B cell (primary cell): ENCODE measurements at regions of chr7 and their contacts with region 1.

Region 1: GRCh38 chr7:5177060-5177459 is 13.0 kb upstream of the WIPI2 start:
- DNase-seq: no peak
- ATAC-seq: no peak
- H3K4me3 ChIP-seq: no peak overlapping the region
- H3K4me3 Mint-ChIP-seq: no peak overlapping the region
- H3K27ac ChIP-seq: no peak overlapping the region
- H3K27ac Mint-ChIP-seq: no peak overlapping the region
- H3K4me1 ChIP-seq: no peaks in the 10 kb centered on the region
- H3K4me1 Mint-ChIP-seq: no peaks in the 10 kb centered on the region
- H3K27me3 ChIP-seq: peaks cover 0 to 2% (median 0%) of the 10 kb centered on the region in 4 experiments
- H3K27me3 Mint-ChIP-seq: no peaks in the 10 kb centered on the region
- CTCF ChIP-seq: no peak

Region 2: GRCh38 chr7:4931943-4932342 is 245.1 kb before region 1 on chr7:
- CTCF ChIA-PET with region 1: no interaction called
- POLR2A ChIA-PET with region 1: no interaction called
- intact Hi-C with region 1: no loop called
- DNase-seq: no peak
- ATAC-seq: no peak
- H3K4me3 ChIP-seq: no peak overlapping the region
- H3K4me3 Mint-ChIP-seq: no peak overlapping the region
- H3K27ac ChIP-seq: no peak overlapping the region
- H3K27ac Mint-ChIP-seq: no peak overlapping the region
- H3K4me1 ChIP-seq: no peaks in the 10 kb centered on the region
- H3K4me1 Mint-ChIP-seq: no peaks in the 10 kb centered on the region
- H3K27me3 ChIP-seq: no peaks in the 10 kb centered on the region
- H3K27me3 Mint-ChIP-seq: peaks cover 5% of the 10 kb centered on the region
- CTCF ChIP-seq: no peak

Region 3: GRCh38 chr7:5139998-5140397 is 37.1 kb before region 1 on chr7:
- CTCF ChIA-PET with region 1: interaction called, 5 read pairs
- POLR2A ChIA-PET with region 1: no interaction called
- intact Hi-C with region 1: loop called (anchors 1 kb)
- DNase-seq: peak; percentile 45
- ATAC-seq: no peak
- H3K4me3 ChIP-seq: no peak overlapping the region
- H3K4me3 Mint-ChIP-seq: no peak overlapping the region
- H3K27ac ChIP-seq: no peak overlapping the region
- H3K27ac Mint-ChIP-seq: no peak overlapping the region
- H3K4me1 ChIP-seq: peaks cover 5 to 13% of the 10 kb centered on the region in 2 donors
- H3K4me1 Mint-ChIP-seq: peaks cover 15% of the 10 kb centered on the region
- H3K27me3 ChIP-seq: no peaks in the 10 kb centered on the region
- H3K27me3 Mint-ChIP-seq: peaks cover 3% of the 10 kb centered on the region
- CTCF ChIP-seq: no peak